CD4-positive, alpha-beta memory T cell (primary cell): ENCODE measurements at regions of chr6 and their contacts with region 1.

Region 1: DNA sequence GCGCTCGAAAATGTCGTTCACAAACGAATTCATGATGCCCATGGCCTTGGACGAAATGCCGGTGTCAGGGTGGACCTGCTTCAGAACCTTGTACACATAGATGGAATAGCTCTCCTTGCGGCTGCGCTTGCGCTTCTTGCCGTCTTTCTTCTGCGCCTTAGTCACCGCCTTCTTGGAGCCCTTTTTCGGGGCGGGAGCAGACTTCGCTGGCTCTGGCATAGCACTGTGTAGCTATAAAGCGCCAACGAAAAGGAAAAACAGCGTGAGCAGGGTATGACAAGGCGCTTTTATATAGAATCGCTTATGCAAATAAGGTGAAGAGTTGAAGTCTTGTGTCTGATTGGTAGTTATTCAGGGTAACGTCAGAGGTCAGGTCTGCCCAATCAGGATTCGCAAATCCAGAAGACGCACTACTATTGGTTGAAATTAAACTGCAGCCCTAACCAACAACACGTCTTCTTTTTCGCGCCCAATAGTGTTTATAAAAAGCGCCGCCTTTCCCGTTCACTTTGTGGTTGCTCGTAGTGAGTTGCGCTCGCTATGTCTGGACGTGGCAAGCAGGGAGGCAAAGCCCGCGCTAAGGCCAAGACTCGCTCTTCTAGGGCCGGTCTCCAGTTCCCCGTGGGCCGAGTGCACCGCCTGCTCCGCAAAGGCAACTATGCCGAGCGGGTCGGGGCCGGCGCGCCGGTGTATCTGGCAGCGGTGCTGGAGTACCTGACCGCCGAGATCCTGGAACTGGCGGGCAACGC is 114.8 kb upstream of the PRSS16 start:
- DNase-seq: peak; percentile 96 to 99 (median 98)
- H3K4me3 ChIP-seq: peak overlapping the region; percentile 72 to 90
- H3K4me3 Mint-ChIP-seq: no peak overlapping the region
- H3K27ac ChIP-seq: peak overlapping the region; percentile 93
- H3K27ac Mint-ChIP-seq: no peak overlapping the region
- H3K4me1 ChIP-seq: peaks cover 27% of the 10 kb centered on the region
- H3K4me1 Mint-ChIP-seq: peaks cover 0 to 24% (median 10%) of the 10 kb centered on the region in 4 donors
- H3K27me3 ChIP-seq: no peaks in the 10 kb centered on the region
- H3K27me3 Mint-ChIP-seq: no peaks in the 10 kb centered on the region

Region 2: GRCh38 chr6:26183581-26184366 is 948.9 kb before region 1 on chr6:
- CTCF ChIA-PET with region 1: no interaction called
- POLR2A ChIA-PET with region 1: interaction called, 10 read pairs
- intact Hi-C with region 1: no loop called
- DNase-seq: peak; percentile 72 to 81 (median 79)
- H3K4me3 ChIP-seq: peak overlapping the region; percentile 2 to 69
- H3K4me3 Mint-ChIP-seq: peak overlapping the region; percentile 90 to 100 (median 96)
- H3K27ac ChIP-seq: peak overlapping the region; percentile 67
- H3K27ac Mint-ChIP-seq: peak overlapping the region; percentile 78 to 99 (median 95)
- H3K4me1 ChIP-seq: peaks cover 45% of the 10 kb centered on the region
- H3K4me1 Mint-ChIP-seq: peaks cover 29 to 54% (median 37%) of the 10 kb centered on the region in 4 donors
- H3K27me3 ChIP-seq: no peaks in the 10 kb centered on the region
- H3K27me3 Mint-ChIP-seq: no peaks in the 10 kb centered on the region

Region 3: GRCh38 chr6:26234421-26235296 is 898.0 kb before region 1 on chr6:
- CTCF ChIA-PET with region 1: no interaction called
- POLR2A ChIA-PET with region 1: interaction called, 32 read pairs
- intact Hi-C with region 1: no loop called
- DNase-seq: peak; percentile 70 to 87 (median 85)
- H3K4me3 ChIP-seq: peak overlapping the region; percentile 66 to 95
- H3K4me3 Mint-ChIP-seq: peak overlapping the region; percentile 93 to 99 (median 96)
- H3K27ac ChIP-seq: peak overlapping the region; percentile 83
- H3K27ac Mint-ChIP-seq: peak overlapping the region; percentile 90 to 99 (median 96)
- H3K4me1 ChIP-seq: peaks cover 23% of the 10 kb centered on the region
- H3K4me1 Mint-ChIP-seq: peaks cover 18 to 43% (median 26%) of the 10 kb centered on the region in 4 donors
- H3K27me3 ChIP-seq: no peaks in the 10 kb centered on the region
- H3K27me3 Mint-ChIP-seq: no peaks in the 10 kb centered on the region

Region 4: GRCh38 chr6:27114792-27115191 is 17.9 kb before region 1 on chr6:
- CTCF ChIA-PET with region 1: no interaction called
- POLR2A ChIA-PET with region 1: no interaction called
- intact Hi-C with region 1: no loop called
- DNase-seq: no peak
- H3K4me3 ChIP-seq: no peak overlapping the region
- H3K4me3 Mint-ChIP-seq: no peak overlapping the region
- H3K27ac ChIP-seq: no peak overlapping the region
- H3K27ac Mint-ChIP-seq: no peak overlapping the region
- H3K4me1 ChIP-seq: no peaks in the 10 kb centered on the region
- H3K4me1 Mint-ChIP-seq: no peaks in the 10 kb centered on the region
- H3K27me3 ChIP-seq: peaks cover 3% of the 10 kb centered on the region
- H3K27me3 Mint-ChIP-seq: peaks cover 14 to 16% of the 10 kb centered on the region in 2 donors

Region 5: GRCh38 chr6:27177485-27178406 is 45.0 kb after region 1 on chr6:
- CTCF ChIA-PET with region 1: interaction called, 11 read pairs
- POLR2A ChIA-PET with region 1: interaction called, 53 read pairs
- intact Hi-C with region 1: no loop called
- DNase-seq: peak; percentile 68 to 80 (median 70)
- H3K4me3 ChIP-seq: peak overlapping the region; percentile 98
- H3K4me3 Mint-ChIP-seq: peak overlapping the region; percentile 95 to 99 (median 98)
- H3K27ac ChIP-seq: peak overlapping the region; percentile 77
- H3K27ac Mint-ChIP-seq: peak overlapping the region; percentile 86 to 100 (median 93)
- H3K4me1 ChIP-seq: peaks cover 7% of the 10 kb centered on the region
- H3K4me1 Mint-ChIP-seq: peaks cover 5 to 29% (median 13%) of the 10 kb centered on the region in 4 donors
- H3K27me3 ChIP-seq: no peaks in the 10 kb centered on the region
- H3K27me3 Mint-ChIP-seq: peaks cover 3 to 4% of the 10 kb centered on the region in 2 donors

Region 6: DNA sequence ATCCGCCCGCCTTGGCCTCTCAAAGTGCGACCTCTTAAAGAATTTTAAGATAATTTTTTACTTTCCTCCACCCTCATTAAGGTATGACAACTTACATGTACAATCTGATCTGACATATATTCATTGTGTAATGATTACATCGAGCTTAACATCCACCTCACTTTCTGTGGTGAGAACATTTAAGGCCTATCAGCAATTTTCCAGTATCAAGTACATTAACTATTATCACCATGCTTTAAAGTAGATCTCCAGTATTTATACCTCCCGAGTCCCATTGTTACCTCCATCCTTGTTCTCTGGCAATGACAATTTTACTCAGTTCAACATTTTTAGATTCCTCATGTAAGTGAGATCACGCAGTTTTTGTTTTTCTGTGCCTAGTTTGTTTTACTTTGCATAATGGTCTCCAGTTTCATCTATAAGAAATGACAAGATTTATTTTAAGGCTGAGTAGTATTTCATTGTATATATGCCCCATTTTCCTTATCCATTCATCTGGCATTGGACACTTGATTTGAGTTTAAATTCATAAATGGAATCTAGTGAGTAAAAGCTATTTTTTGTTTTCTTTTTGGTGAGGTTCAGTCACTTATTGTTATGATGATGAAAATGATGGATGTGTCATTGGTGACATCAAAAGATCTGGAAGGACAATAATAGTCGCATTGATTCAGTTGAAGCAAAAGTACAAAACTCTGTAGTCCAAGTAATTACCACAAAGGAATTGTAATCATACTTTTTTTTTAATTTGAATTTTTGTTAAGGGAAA is 692.5 kb after region 1 on chr6:
- CTCF ChIA-PET with region 1: no interaction called
- POLR2A ChIA-PET with region 1: interaction called, 16 read pairs
- intact Hi-C with region 1: no loop called
- DNase-seq: no peak
- H3K4me3 ChIP-seq: peak overlapping the region; percentile 62 to 79
- H3K4me3 Mint-ChIP-seq: peak overlapping the region; percentile 88 to 98 (median 92)
- H3K27ac ChIP-seq: peak overlapping the region; percentile 66
- H3K27ac Mint-ChIP-seq: peak overlapping the region; percentile 91 to 100 (median 98)
- H3K4me1 ChIP-seq: peaks cover 29% of the 10 kb centered on the region
- H3K4me1 Mint-ChIP-seq: peaks cover 16 to 43% (median 31%) of the 10 kb centered on the region in 4 donors
- H3K27me3 ChIP-seq: no peaks in the 10 kb centered on the region
- H3K27me3 Mint-ChIP-seq: no peaks in the 10 kb centered on the region

Region 7: GRCh38 chr6:28863604-28864320 is 1731.1 kb after region 1 on chr6:
- CTCF ChIA-PET with region 1: no interaction called
- POLR2A ChIA-PET with region 1: interaction called, 9 read pairs
- intact Hi-C with region 1: loop called (anchors 10 kb)
- DNase-seq: peak; percentile 88 to 91 (median 89)
- H3K4me3 ChIP-seq: peak overlapping the region; percentile 53 to 85
- H3K4me3 Mint-ChIP-seq: peak overlapping the region; percentile 92 to 97 (median 94)
- H3K27ac ChIP-seq: peak overlapping the region; percentile 45
- H3K27ac Mint-ChIP-seq: peak overlapping the region; percentile 79 to 99 (median 97)
- H3K4me1 ChIP-seq: peaks cover 14% of the 10 kb centered on the region
- H3K4me1 Mint-ChIP-seq: peaks cover 21 to 64% (median 43%) of the 10 kb centered on the region in 4 donors
- H3K27me3 ChIP-seq: no peaks in the 10 kb centered on the region
- H3K27me3 Mint-ChIP-seq: peaks cover 4 to 5% of the 10 kb centered on the region in 2 donors